AG04450 (cell line): ENCODE measurements at regions of chr2 and their contacts with region 1.

Region 1: GRCh38 chr2:86608832-86609410 is 14.7 kb downstream of the RNF103 start:
- DNase-seq: no peak
- H3K4me3 ChIP-seq: no peak overlapping the region
- H3K27ac ChIP-seq: no peak overlapping the region
- H3K27me3 ChIP-seq: no peaks in the 10 kb centered on the region
- CTCF ChIP-seq: no peak

Region 2: GRCh38 chr2:86135653-86136052 is 473.3 kb before region 1 on chr2:
- CTCF ChIA-PET with region 1: interaction called, 15 read pairs
- POLR2A ChIA-PET with region 1: no interaction called
- DNase-seq: no peak
- H3K4me3 ChIP-seq: no peak overlapping the region
- H3K27ac ChIP-seq: no peak overlapping the region
- H3K27me3 ChIP-seq: no peaks in the 10 kb centered on the region
- CTCF ChIP-seq: no peak

Region 3: GRCh38 chr2:86358957-86359356 is 250.0 kb before region 1 on chr2:
- CTCF ChIA-PET with region 1: no interaction called
- POLR2A ChIA-PET with region 1: no interaction called
- DNase-seq: no peak
- H3K4me3 ChIP-seq: no peak overlapping the region
- H3K27ac ChIP-seq: no peak overlapping the region
- H3K27me3 ChIP-seq: peaks cover 6% of the 10 kb centered on the region
- CTCF ChIP-seq: no peak

Region 4: GRCh38 chr2:86584151-86584913 is 24.6 kb before region 1 on chr2:
- CTCF ChIA-PET with region 1: no interaction called
- POLR2A ChIA-PET with region 1: no interaction called
- DNase-seq: no peak
- H3K4me3 ChIP-seq: no peak overlapping the region
- H3K27ac ChIP-seq: no peak overlapping the region
- H3K27me3 ChIP-seq: no peaks in the 10 kb centered on the region
- CTCF ChIP-seq: no peak